Posterior vena cava (tissue), 2 donors: ENCODE measurements at regions of chr7 and their contacts with region 1.

Region 1: GRCh38 chr7:69062020-69062765 is 536.1 kb upstream of the AUTS2 start:
- DNase-seq: no peak

Region 2: DNA sequence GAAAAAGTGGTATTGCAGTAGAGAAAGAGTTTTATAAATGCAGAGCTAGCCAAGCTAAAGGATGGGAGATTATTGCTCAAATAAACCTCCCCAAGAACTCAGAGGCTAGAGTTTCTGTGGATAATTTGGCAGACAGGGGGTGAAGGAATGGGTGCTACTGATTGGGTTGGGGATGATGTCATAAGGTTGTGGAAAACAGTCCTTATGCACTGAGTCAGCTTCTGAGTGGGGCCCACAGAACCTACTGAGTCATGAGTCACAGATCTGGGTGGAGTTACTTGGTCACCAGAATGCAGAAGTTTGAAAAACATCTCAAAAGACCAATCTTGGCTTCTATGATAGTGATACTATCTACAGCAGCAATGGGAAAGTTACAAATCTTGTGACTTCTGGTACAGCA is 918.8 kb before region 1 on chr7:
- intact Hi-C with region 1: loop called in 1 of 2 experiments (anchors 5 kb)
- DNase-seq: no peak

Region 3: DNA sequence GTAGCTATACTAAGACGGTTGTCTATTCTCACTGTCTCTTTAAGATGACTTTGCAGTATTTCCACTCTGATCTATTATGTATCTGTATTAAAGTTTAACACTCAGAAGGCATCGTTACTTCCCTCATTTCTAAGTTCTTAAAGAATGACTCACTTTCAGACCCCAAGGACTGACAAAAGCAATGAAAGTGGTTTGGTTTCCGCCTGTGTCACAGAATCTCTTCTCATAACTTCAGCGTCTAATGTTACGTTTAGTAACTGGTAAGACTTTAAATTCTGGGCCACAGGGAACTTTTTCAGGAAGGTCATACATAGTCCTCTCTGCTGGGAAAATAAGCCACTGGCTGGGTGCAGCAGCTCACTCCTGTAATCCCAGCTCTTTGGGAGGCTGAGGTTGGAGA is 355.9 kb before region 1 on chr7:
- intact Hi-C with region 1: no loop called
- DNase-seq: no peak